Ascending aorta (tissue), 2 donors: ENCODE measurements at regions of chr20 and their contacts with region 1.

Region 1: DNA sequence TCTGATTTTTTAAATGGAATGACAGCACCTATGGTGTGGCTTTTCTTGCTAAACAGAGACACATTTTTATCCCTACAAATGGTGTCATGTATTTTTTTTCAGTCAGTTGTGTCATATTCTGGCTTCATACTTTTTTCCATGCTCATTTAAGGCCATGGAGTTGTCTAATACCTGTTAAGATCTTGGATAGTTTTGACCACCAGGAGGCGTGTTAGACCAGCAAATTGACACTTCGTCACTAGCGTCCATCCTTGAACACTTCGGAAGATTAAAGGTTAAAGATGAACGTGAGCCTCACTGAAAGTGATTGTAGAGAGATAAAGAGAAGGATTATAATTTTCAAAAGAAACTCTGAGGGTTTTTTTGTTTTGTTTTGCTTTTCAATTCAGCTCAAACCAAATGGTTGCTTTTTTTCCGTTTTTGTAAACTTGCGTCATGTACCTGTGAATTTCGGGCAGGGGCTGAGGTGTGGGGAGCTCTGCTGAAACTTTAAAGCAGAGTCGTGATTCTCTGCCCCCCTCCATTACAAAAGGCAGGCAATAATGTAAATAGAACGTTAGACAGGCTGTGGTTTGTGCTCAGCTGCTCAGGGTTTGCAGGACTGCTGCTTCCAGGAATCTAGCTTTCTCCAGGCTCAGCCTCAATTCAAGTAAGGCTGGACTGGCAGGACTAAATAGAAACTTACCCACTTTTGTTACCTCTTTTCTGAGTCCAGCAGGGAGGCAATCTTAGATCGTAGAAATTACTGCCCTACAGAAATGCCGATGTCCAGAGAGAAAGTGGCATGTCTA is 245.1 kb downstream of the FOXA2 start:
- DNase-seq: peak in 1 of 2 donors; percentile 72
- H3K4me3 ChIP-seq: peak overlapping the region in 1 of 2 donors; percentile 47
- H3K27ac ChIP-seq: peak overlapping the region in 1 of 2 donors; percentile 11
- H3K4me1 ChIP-seq: peaks cover 0 to 9% of the 10 kb centered on the region in 2 donors
- H3K27me3 ChIP-seq: no peaks in the 10 kb centered on the region
- CTCF ChIP-seq: peak; percentile 66 to 75 (median 68)

Region 2: GRCh38 chr20:22586645-22587310 is 247.5 kb after region 1 on chr20:
- intact Hi-C with region 1: loop called (anchors 5 kb)
- DNase-seq: no peak
- H3K4me3 ChIP-seq: no peak overlapping the region
- H3K27ac ChIP-seq: no peak overlapping the region
- H3K4me1 ChIP-seq: peaks cover 7 to 11% of the 10 kb centered on the region in 2 donors
- H3K27me3 ChIP-seq: peaks cover 18% of the 10 kb centered on the region
- CTCF ChIP-seq: peak in 2 of 3 experiments; percentile 14 to 41

Region 3: DNA sequence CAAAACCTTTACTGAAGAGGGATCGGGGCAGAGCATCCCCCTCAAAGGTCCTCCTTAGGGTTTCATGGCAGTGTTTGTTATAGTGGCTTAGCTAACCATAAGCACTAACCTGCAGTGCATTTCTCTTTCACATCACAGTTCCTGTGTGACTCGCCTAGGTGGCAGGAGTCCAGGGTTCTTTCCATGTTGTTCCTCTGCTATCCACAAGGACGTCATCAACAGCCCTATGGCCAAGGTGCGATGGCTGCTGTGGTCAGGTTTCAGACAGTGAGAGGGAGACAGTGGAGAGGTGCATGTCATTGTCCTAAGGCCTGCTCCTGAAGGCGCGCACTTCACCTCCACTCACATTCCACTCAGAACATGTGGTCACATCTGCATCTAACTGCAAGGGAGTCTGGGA is 283.9 kb after region 1 on chr20:
- intact Hi-C with region 1: no loop called
- DNase-seq: no peak
- H3K4me3 ChIP-seq: no peak overlapping the region
- H3K27ac ChIP-seq: no peak overlapping the region
- H3K4me1 ChIP-seq: no peaks in the 10 kb centered on the region
- H3K27me3 ChIP-seq: no peaks in the 10 kb centered on the region
- CTCF ChIP-seq: no peak